Activated B cell treated with CpG ODN at 0.5 μM for 24 hours (primary cell): ENCODE measurements at regions of chr22 and their contacts with region 1.

Region 1: GRCh38 chr22:36387752-36388518 is at the start of gene MYH9:
- DNase-seq: peak; percentile 97
- ATAC-seq: peak; percentile 79
- H3K4me3 Mint-ChIP-seq: peak within 1 kb of the TSS; percentile 94
- H3K27ac Mint-ChIP-seq: peak within 1 kb of the TSS; percentile 97
- H3K4me1 Mint-ChIP-seq: peaks cover 64% of the 10 kb centered on the region
- H3K27me3 Mint-ChIP-seq: no peaks in the 10 kb centered on the region
- CTCF ChIP-seq: no peak
- total RNA-seq, gene MYH9: 714 and 755 TPM in 2 replicates

Region 2: GRCh38 chr22:36359181-36359996 is 28.5 kb before region 1 on chr22:
- CTCF ChIA-PET with region 1: interaction called, 3 read pairs
- POLR2A ChIA-PET with region 1: interaction called, 27 read pairs
- intact Hi-C with region 1: loop called (anchors 1 kb)
- DNase-seq: peak; percentile 59
- ATAC-seq: peak; percentile 85
- H3K4me3 Mint-ChIP-seq: peak overlapping the region; percentile 72
- H3K27ac Mint-ChIP-seq: peak overlapping the region; percentile 95
- H3K4me1 Mint-ChIP-seq: peaks cover 99% of the 10 kb centered on the region
- H3K27me3 Mint-ChIP-seq: no peaks in the 10 kb centered on the region
- CTCF ChIP-seq: no peak

Region 3: GRCh38 chr22:36369922-36370791 is 17.8 kb before region 1 on chr22:
- CTCF ChIA-PET with region 1: interaction called, 4 read pairs
- POLR2A ChIA-PET with region 1: interaction called, 126 read pairs
- intact Hi-C with region 1: loop called (anchors 1 kb)
- DNase-seq: peak; percentile 51
- ATAC-seq: peak; percentile 89
- H3K4me3 Mint-ChIP-seq: peak overlapping the region; percentile 79
- H3K27ac Mint-ChIP-seq: peak overlapping the region; percentile 91
- H3K4me1 Mint-ChIP-seq: peaks cover 96% of the 10 kb centered on the region
- H3K27me3 Mint-ChIP-seq: no peaks in the 10 kb centered on the region
- CTCF ChIP-seq: no peak

Region 4: GRCh38 chr22:36409911-36410756 is 22.2 kb after region 1 on chr22:
- CTCF ChIA-PET with region 1: no interaction called
- POLR2A ChIA-PET with region 1: interaction called, 27 read pairs
- intact Hi-C with region 1: loop called (anchors 1 kb)
- DNase-seq: peak; percentile 60
- ATAC-seq: peak; percentile 70
- H3K4me3 Mint-ChIP-seq: peak overlapping the region; percentile 83
- H3K27ac Mint-ChIP-seq: peak overlapping the region; percentile 89
- H3K4me1 Mint-ChIP-seq: peaks cover 65% of the 10 kb centered on the region
- H3K27me3 Mint-ChIP-seq: no peaks in the 10 kb centered on the region
- CTCF ChIP-seq: no peak

Region 5: DNA sequence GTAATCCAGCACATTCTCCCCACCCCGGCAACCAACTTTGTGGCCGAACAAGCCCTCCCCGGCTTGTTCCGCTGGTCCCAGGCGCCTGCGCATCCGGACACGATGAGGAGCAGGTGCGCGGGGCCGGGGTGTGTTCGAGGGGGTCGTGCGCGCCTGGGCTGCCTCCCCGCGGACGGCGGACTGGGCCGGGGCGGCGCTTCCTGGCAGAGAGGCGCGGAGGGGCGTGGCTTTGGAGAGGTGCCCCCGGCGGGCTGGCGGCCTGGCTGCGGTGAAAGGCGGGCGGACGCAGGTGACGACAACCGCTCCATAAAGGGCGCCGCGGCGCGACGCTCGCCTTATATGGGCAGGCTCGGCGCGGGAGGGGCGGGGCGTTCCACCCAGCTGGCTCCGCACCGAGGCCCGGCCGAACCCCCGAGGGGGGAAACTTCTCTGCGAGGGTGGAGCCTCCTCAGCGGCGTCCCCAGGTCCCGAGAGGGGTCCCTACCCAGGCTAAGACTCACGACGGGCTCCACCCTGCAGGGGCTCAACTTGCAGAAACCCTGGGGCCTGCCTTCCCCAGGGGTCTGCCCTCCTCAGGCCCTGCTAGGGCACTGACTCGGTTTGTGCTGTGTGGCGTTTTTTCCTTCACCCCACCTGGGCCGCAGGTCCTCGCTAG is 67.1 kb after region 1 on chr22:
- CTCF ChIA-PET with region 1: no interaction called
- POLR2A ChIA-PET with region 1: interaction called, 91 read pairs
- intact Hi-C with region 1: loop called (anchors 1 kb)
- DNase-seq: peak; percentile 91
- ATAC-seq: peak; percentile 66
- H3K4me3 Mint-ChIP-seq: peak overlapping the region; percentile 69
- H3K27ac Mint-ChIP-seq: peak overlapping the region; percentile 95
- H3K4me1 Mint-ChIP-seq: peaks cover 56% of the 10 kb centered on the region
- H3K27me3 Mint-ChIP-seq: no peaks in the 10 kb centered on the region
- CTCF ChIP-seq: no peak